ENCODE measurements at regions of chr5 and their contacts with region 1.

Region 1: GRCh38 chr5:67724412-67725135 is 491.0 kb upstream of the PIK3R1 start:
- DNase-seq: no peak
- ATAC-seq: no peak
- H3K4me3 ChIP-seq: no peak overlapping the region
- H3K27ac ChIP-seq: no peak overlapping the region
- H3K4me1 ChIP-seq: peaks cover 0 to 2% (median 0%) of the 10 kb centered on the region in 9 donors
- H3K27me3 ChIP-seq: no peaks in the 10 kb centered on the region
- CTCF ChIP-seq: no peak

Region 2: DNA sequence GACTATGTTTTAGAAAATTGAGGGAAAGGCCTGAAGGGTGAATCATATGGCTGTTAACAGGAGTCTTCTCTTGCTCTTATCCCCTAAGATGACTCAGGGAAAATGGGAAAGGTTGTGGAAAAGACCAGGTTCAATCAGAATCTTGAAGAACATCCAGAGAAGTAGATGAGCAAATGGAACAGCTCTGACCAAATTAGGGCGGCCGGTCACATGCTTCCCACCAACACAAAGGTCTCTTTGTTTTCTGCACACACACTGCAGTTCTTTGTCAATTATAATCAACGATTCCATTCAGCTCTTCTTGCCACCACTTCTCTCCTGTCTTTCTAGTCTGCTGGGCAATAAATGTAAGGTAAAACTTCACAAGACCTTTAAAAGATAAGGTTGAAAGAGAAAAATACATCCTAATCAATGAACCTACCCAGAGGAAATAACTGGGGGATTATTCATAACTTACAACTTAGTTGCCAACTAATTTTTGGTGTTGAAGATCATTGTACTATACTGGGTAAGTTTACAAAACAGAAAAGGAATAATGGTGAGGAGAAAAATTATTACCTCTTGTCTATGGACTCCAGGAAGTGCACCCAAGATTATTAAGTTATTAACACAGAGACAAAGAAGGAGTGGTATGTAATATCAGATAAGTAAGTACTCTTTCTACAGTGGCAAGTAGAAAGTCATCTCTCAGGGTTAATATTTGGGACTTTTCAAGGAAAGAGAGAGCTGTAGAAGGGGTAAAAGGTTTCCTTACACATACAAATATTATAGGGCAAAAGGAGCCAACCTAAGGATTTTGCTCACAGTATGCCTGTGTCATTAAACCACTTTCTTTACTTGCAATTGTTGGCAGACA is 49.1 kb after region 1 on chr5:
- intact Hi-C with region 1: loop called in 1 of 10 experiments (anchors 10 kb)
- DNase-seq: peak in 1 of 2 donors; percentile 18
- ATAC-seq: peak; percentile 47 to 92 (median 76)
- H3K4me3 ChIP-seq: no peak overlapping the region
- H3K27ac ChIP-seq: peak overlapping the region in 7 of 10 donors; percentile 11 to 51 (median 37)
- H3K4me1 ChIP-seq: peaks cover 0 to 14% (median 0%) of the 10 kb centered on the region in 9 donors
- H3K27me3 ChIP-seq: no peaks in the 10 kb centered on the region
- CTCF ChIP-seq: no peak

Measured in heart right ventricle (tissue), 16 donors.